CD8-positive, alpha-beta T cell (primary cell): ENCODE measurements at regions of chr7 and their contacts with region 1.

Region 1: GRCh38 chr7:7182156-7183060 is at the start of gene C1GALT1:
- DNase-seq: peak; percentile 96 to 100 (median 98)
- ATAC-seq: peak; percentile 87
- H3K4me3 ChIP-seq: peak within 1 kb of the TSS; percentile 82 to 98
- H3K4me3 Mint-ChIP-seq: peak within 1 kb of the TSS; percentile 95
- H3K27ac ChIP-seq: peak within 1 kb of the TSS; percentile 90 to 93
- H3K27ac Mint-ChIP-seq: peak within 1 kb of the TSS; percentile 94
- H3K4me1 ChIP-seq: peaks cover 42% of the 10 kb centered on the region
- H3K4me1 Mint-ChIP-seq: peaks cover 8% of the 10 kb centered on the region
- H3K27me3 ChIP-seq: no peaks in the 10 kb centered on the region
- H3K27me3 Mint-ChIP-seq: no peaks in the 10 kb centered on the region
- CTCF ChIP-seq: peak; percentile 33
- total RNA-seq, gene C1GALT1: 57.4 to 60.7 TPM

Region 2: DNA sequence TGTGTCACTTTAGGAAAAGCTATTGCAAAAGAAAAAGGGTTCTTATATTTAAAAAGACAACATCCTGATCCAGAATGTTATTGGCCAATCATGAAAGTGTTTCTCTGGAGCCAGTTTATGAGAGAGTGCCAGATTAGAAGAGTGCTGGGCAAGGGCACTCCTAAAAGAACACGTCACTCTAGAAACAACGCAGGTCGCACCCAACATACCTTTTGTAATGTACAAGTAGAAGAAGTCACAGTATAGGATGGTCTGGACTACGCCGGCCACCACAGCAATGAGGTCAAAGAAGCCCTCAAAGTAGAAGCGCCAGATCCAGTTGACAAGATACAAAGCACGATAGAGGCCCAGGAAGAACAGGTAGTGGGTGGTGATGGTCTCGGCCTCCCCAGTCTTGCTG is 716.5 kb before region 1 on chr7:
- CTCF ChIA-PET with region 1: no interaction called
- POLR2A ChIA-PET with region 1: no interaction called
- intact Hi-C with region 1: no loop called
- DNase-seq: no peak
- ATAC-seq: no peak
- H3K4me3 ChIP-seq: no peak overlapping the region
- H3K4me3 Mint-ChIP-seq: no peak overlapping the region
- H3K27ac ChIP-seq: no peak overlapping the region
- H3K27ac Mint-ChIP-seq: no peak overlapping the region
- H3K4me1 ChIP-seq: no peaks in the 10 kb centered on the region
- H3K4me1 Mint-ChIP-seq: no peaks in the 10 kb centered on the region
- H3K27me3 ChIP-seq: no peaks in the 10 kb centered on the region
- H3K27me3 Mint-ChIP-seq: no peaks in the 10 kb centered on the region
- CTCF ChIP-seq: no peak

Region 3: GRCh38 chr7:7157177-7157886 is 25.1 kb before region 1 on chr7:
- CTCF ChIA-PET with region 1: interaction called, 13 read pairs
- POLR2A ChIA-PET with region 1: interaction called, 17 read pairs
- intact Hi-C with region 1: loop called (anchors 1 to 2 kb)
- DNase-seq: peak; percentile 23 to 88 (median 68)
- ATAC-seq: peak; percentile 94
- H3K4me3 ChIP-seq: peak overlapping the region; percentile 39 to 42
- H3K4me3 Mint-ChIP-seq: peak overlapping the region; percentile 75
- H3K27ac ChIP-seq: peak overlapping the region; percentile 32 to 68
- H3K27ac Mint-ChIP-seq: peak overlapping the region; percentile 85
- H3K4me1 ChIP-seq: peaks cover 58% of the 10 kb centered on the region
- H3K4me1 Mint-ChIP-seq: peaks cover 61% of the 10 kb centered on the region
- H3K27me3 ChIP-seq: no peaks in the 10 kb centered on the region
- H3K27me3 Mint-ChIP-seq: no peaks in the 10 kb centered on the region
- CTCF ChIP-seq: no peak

Region 4: GRCh38 chr7:7201578-7202374 is 19.4 kb after region 1 on chr7:
- CTCF ChIA-PET with region 1: interaction called, 5 read pairs
- POLR2A ChIA-PET with region 1: interaction called, 11 read pairs
- intact Hi-C with region 1: no loop called
- DNase-seq: peak; percentile 4 to 70 (median 49)
- ATAC-seq: peak; percentile 90
- H3K4me3 ChIP-seq: peak overlapping the region in 1 of 2 experiments; percentile 24
- H3K4me3 Mint-ChIP-seq: peak overlapping the region; percentile 67
- H3K27ac ChIP-seq: peak overlapping the region in 1 of 2 experiments; percentile 62
- H3K27ac Mint-ChIP-seq: peak overlapping the region; percentile 91
- H3K4me1 ChIP-seq: peaks cover 44% of the 10 kb centered on the region
- H3K4me1 Mint-ChIP-seq: peaks cover 80% of the 10 kb centered on the region
- H3K27me3 ChIP-seq: no peaks in the 10 kb centered on the region
- H3K27me3 Mint-ChIP-seq: no peaks in the 10 kb centered on the region
- CTCF ChIP-seq: no peak

Region 5: GRCh38 chr7:7257899-7258692 is 75.7 kb after region 1 on chr7:
- CTCF ChIA-PET with region 1: interaction called, 6 read pairs
- POLR2A ChIA-PET with region 1: interaction called, 9 read pairs
- intact Hi-C with region 1: loop called (anchors 1 to 5 kb)
- DNase-seq: peak in 2 of 9 experiments; percentile 42 to 63
- ATAC-seq: peak; percentile 54
- H3K4me3 ChIP-seq: peak overlapping the region in 1 of 2 experiments; percentile 58
- H3K4me3 Mint-ChIP-seq: peak overlapping the region; percentile 70
- H3K27ac ChIP-seq: peak overlapping the region; percentile 64 to 95
- H3K27ac Mint-ChIP-seq: peak overlapping the region; percentile 88
- H3K4me1 ChIP-seq: peaks cover 27% of the 10 kb centered on the region
- H3K4me1 Mint-ChIP-seq: peaks cover 41% of the 10 kb centered on the region
- H3K27me3 ChIP-seq: no peaks in the 10 kb centered on the region
- H3K27me3 Mint-ChIP-seq: no peaks in the 10 kb centered on the region
- CTCF ChIP-seq: no peak

Region 6: GRCh38 chr7:7566651-7567611 is 384.5 kb after region 1 on chr7 and contains the start of gene MIOS:
- CTCF ChIA-PET with region 1: no interaction called
- POLR2A ChIA-PET with region 1: interaction called, 3 read pairs
- intact Hi-C with region 1: loop called (anchors 1 kb)
- DNase-seq: peak; percentile 65 to 92 (median 77)
- ATAC-seq: peak; percentile 90
- H3K4me3 ChIP-seq: peak within 1 kb of the TSS; percentile 62 to 73
- H3K4me3 Mint-ChIP-seq: peak within 1 kb of the TSS; percentile 78
- H3K27ac ChIP-seq: peak within 1 kb of the TSS; percentile 83
- H3K27ac Mint-ChIP-seq: peak within 1 kb of the TSS; percentile 92
- H3K4me1 ChIP-seq: peaks cover 34% of the 10 kb centered on the region
- H3K4me1 Mint-ChIP-seq: peaks cover 35% of the 10 kb centered on the region
- H3K27me3 ChIP-seq: no peaks in the 10 kb centered on the region
- H3K27me3 Mint-ChIP-seq: no peaks in the 10 kb centered on the region
- CTCF ChIP-seq: no peak
- total RNA-seq, gene MIOS: 35.1 to 36.8 TPM

Region 7: GRCh38 chr7:7968543-7969305 is 786.3 kb after region 1 on chr7 and contains the start of gene GLCCI1:
- CTCF ChIA-PET with region 1: no interaction called
- POLR2A ChIA-PET with region 1: no interaction called
- intact Hi-C with region 1: loop called in 1 of 2 experiments (anchors 1 kb)
- DNase-seq: peak; percentile 91 to 99 (median 96)
- ATAC-seq: peak; percentile 88
- H3K4me3 ChIP-seq: peak within 1 kb of the TSS; percentile 44 to 74
- H3K4me3 Mint-ChIP-seq: peak within 1 kb of the TSS; percentile 92
- H3K27ac ChIP-seq: peak within 1 kb of the TSS; percentile 61 to 79
- H3K27ac Mint-ChIP-seq: peak within 1 kb of the TSS; percentile 95
- H3K4me1 ChIP-seq: peaks cover 35% of the 10 kb centered on the region
- H3K4me1 Mint-ChIP-seq: peaks cover 36% of the 10 kb centered on the region
- H3K27me3 ChIP-seq: no peaks in the 10 kb centered on the region
- H3K27me3 Mint-ChIP-seq: no peaks in the 10 kb centered on the region
- CTCF ChIP-seq: no peak
- total RNA-seq, gene GLCCI1: 21.8 to 23.6 TPM

Region 8: GRCh38 chr7:8217200-8218068 is 1035.0 kb after region 1 on chr7:
- CTCF ChIA-PET with region 1: no interaction called
- POLR2A ChIA-PET with region 1: no interaction called
- intact Hi-C with region 1: loop called in 1 of 2 experiments (anchors 5 kb)
- DNase-seq: peak in 3 of 9 experiments; percentile 55 to 81 (median 74)
- ATAC-seq: peak; percentile 58
- H3K4me3 ChIP-seq: no peak overlapping the region
- H3K4me3 Mint-ChIP-seq: no peak overlapping the region
- H3K27ac ChIP-seq: no peak overlapping the region
- H3K27ac Mint-ChIP-seq: no peak overlapping the region
- H3K4me1 ChIP-seq: no peaks in the 10 kb centered on the region
- H3K4me1 Mint-ChIP-seq: peaks cover 3% of the 10 kb centered on the region
- H3K27me3 ChIP-seq: no peaks in the 10 kb centered on the region
- H3K27me3 Mint-ChIP-seq: no peaks in the 10 kb centered on the region
- CTCF ChIP-seq: peak; percentile 79